ENCODE measurements at regions of chr15 and their contacts with region 1.

Region 1: GRCh38 chr15:28107111-28107888 is 8.2 kb upstream of the OCA2 start:
- DNase-seq: peak; percentile 33
- ATAC-seq: peak; percentile 39
- H3K4me3 Mint-ChIP-seq: peak overlapping the region; percentile 73
- H3K27ac Mint-ChIP-seq: no peak overlapping the region
- H3K4me1 Mint-ChIP-seq: peaks cover 8% of the 10 kb centered on the region
- H3K27me3 Mint-ChIP-seq: peaks cover 10% of the 10 kb centered on the region

Region 2: DNA sequence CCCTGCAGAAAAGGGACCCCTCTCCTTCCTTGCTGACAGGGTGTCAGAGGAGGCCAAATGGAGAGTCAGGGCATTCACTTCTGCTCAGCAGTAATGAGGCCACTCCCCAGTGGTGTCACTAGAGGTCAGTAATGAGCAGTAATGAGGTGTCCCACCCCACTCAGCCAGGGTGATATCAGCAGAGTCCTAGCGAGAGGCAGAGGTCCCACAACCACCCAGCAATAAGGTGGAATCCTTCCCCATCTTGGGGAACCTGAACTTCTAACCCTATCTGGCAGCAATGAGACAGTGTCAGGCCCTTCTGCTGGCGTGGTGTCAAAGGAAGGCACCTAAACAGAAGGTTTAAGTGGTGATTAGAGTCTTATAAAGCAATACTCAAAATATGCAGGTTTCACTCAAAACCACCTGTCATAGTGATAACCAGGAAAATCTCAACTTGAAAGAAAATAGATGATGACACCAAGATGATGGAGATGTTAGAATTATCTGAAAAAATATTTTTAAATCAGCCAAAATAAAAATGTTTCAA is 21.1 kb before region 1 on chr15:
- CTCF ChIA-PET with region 1: interaction called, 6 read pairs
- POLR2A ChIA-PET with region 1: no interaction called
- intact Hi-C with region 1: loop called in 1 of 2 experiments (anchors 2 kb)
- DNase-seq: peak; percentile 70
- ATAC-seq: peak; percentile 98
- H3K4me3 Mint-ChIP-seq: no peak overlapping the region
- H3K27ac Mint-ChIP-seq: no peak overlapping the region
- H3K4me1 Mint-ChIP-seq: peaks cover 4% of the 10 kb centered on the region
- H3K27me3 Mint-ChIP-seq: peaks cover 44% of the 10 kb centered on the region

Region 3: DNA sequence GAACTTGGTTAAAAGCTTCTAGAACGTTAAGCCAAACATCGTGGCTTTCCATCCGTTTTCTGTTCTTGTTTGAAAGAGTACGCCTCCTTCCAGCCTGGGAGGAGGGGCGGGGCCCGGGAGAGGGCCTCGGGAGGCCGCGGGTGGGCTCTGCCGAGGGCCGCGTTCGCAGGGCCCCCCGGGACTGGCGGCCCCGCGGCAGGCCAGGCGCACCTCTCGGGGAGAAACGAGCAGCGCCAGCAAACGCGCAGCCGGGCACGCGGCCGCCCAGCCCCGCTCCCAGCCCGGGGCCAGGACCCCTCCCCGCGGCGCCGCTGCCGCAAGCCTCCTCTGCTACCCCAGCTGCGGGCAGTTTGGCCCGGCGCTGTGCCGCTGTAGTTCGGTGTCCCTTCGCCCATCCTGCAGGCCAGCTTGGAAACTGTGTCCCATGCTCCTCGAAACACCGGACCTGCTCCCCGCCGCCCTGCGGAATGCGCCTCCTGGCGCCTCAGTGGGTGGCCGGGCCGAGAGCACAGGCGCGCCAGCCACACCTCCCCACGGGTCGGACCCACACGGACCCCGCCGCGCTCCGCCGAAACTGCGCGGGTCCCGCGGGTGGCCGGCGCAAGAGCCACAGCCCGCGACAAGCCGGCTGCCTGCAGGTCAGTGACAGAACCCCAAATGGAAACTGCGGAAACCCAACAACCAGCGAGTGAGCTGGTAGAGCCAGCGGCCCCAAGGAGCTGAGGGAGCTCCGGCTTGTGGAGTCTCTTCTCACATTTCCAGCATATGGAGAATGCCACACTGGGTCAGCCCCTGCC is 10.4 kb before region 1 on chr15:
- CTCF ChIA-PET with region 1: interaction called, 4 read pairs
- POLR2A ChIA-PET with region 1: no interaction called
- intact Hi-C with region 1: loop called in 1 of 2 experiments (anchors 1 kb)
- DNase-seq: no peak
- ATAC-seq: no peak
- H3K4me3 Mint-ChIP-seq: peak overlapping the region; percentile 77
- H3K27ac Mint-ChIP-seq: no peak overlapping the region
- H3K4me1 Mint-ChIP-seq: peaks cover 24% of the 10 kb centered on the region
- H3K27me3 Mint-ChIP-seq: peaks cover 53% of the 10 kb centered on the region

Region 4: DNA sequence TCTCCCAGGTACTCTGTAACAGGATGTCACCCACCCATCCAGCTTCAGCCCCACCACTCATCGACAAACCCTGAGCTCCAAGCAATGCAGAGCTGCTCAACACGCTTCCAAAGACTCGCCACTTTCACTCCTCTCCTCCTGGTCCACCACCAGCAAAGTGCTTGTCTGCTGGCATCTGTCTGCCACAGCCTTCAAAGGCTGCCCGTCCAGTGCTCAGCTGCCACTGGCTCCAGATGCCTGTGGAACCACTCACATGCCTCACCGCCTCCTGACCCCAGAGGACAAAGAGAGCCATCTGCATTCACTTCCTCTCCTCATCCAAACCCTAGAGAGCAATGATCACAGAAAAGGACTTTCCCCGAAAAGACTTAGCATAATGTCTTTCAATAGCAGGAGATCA is 101.3 kb after region 1 on chr15:
- CTCF ChIA-PET with region 1: no interaction called
- POLR2A ChIA-PET with region 1: no interaction called
- intact Hi-C with region 1: no loop called
- DNase-seq: no peak
- ATAC-seq: no peak
- H3K4me3 Mint-ChIP-seq: no peak overlapping the region
- H3K27ac Mint-ChIP-seq: no peak overlapping the region
- H3K4me1 Mint-ChIP-seq: no peaks in the 10 kb centered on the region
- H3K27me3 Mint-ChIP-seq: no peaks in the 10 kb centered on the region